Activated T-helper 1 cell treated with anti-CD3 and anti-CD28 coated beads, Interleukin-12 subunit alpha, Interleukin-12 subunit beta, Interleukin-2, Interleukin-4 antibody, amounts not matched to agents 30 ng/mL and 10 ng/mL and 1 ng/mL, durations not matched to agents 14 hours and 24 hours and 36 hours (primary cell): ENCODE measurements at regions of chr3 and their contacts with region 1.

Region 1: GRCh38 chr3:183224180-183224970 is 28.7 kb upstream of the B3GNT5 start:
- DNase-seq: peak; percentile 52
- H3K4me3 Mint-ChIP-seq: peak overlapping the region; percentile 53
- H3K27ac Mint-ChIP-seq: peak overlapping the region; percentile 88
- H3K4me1 Mint-ChIP-seq: peaks cover 44% of the 10 kb centered on the region
- H3K27me3 Mint-ChIP-seq: no peaks in the 10 kb centered on the region

Region 2: GRCh38 chr3:183185696-183186095 is 38.7 kb before region 1 on chr3:
- intact Hi-C with region 1: loop called (anchors 2 kb)
- DNase-seq: no peak
- H3K4me3 Mint-ChIP-seq: no peak overlapping the region
- H3K27ac Mint-ChIP-seq: no peak overlapping the region
- H3K4me1 Mint-ChIP-seq: peaks cover 8% of the 10 kb centered on the region
- H3K27me3 Mint-ChIP-seq: peaks cover 3% of the 10 kb centered on the region

Region 3: DNA sequence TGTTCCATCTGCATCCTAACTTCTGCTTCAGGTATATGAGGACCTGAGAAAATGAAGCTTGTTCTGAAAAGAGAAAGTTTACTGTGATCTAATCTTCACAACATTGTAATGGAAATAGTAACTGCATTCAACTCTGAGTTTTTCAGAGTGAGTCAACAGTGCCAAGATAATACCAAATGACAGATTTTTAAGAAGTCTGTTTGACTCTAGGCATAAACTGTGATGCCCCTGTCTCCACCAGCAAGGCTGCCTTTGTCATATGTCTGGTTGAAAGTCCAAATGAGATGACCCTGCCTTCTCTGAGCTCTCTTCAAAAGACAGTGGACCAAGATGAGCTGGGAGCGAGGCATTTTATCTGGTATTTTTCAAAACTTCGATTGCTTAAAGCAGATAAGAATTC is 16.1 kb before region 1 on chr3:
- intact Hi-C with region 1: loop called (anchors 1 kb)
- DNase-seq: no peak
- H3K4me3 Mint-ChIP-seq: no peak overlapping the region
- H3K27ac Mint-ChIP-seq: peak overlapping the region; percentile 69
- H3K4me1 Mint-ChIP-seq: peaks cover 22% of the 10 kb centered on the region
- H3K27me3 Mint-ChIP-seq: peaks cover 2% of the 10 kb centered on the region